Tibial artery (tissue), 4 donors: ENCODE measurements at regions of chr14 and their contacts with region 1.

Region 1: DNA sequence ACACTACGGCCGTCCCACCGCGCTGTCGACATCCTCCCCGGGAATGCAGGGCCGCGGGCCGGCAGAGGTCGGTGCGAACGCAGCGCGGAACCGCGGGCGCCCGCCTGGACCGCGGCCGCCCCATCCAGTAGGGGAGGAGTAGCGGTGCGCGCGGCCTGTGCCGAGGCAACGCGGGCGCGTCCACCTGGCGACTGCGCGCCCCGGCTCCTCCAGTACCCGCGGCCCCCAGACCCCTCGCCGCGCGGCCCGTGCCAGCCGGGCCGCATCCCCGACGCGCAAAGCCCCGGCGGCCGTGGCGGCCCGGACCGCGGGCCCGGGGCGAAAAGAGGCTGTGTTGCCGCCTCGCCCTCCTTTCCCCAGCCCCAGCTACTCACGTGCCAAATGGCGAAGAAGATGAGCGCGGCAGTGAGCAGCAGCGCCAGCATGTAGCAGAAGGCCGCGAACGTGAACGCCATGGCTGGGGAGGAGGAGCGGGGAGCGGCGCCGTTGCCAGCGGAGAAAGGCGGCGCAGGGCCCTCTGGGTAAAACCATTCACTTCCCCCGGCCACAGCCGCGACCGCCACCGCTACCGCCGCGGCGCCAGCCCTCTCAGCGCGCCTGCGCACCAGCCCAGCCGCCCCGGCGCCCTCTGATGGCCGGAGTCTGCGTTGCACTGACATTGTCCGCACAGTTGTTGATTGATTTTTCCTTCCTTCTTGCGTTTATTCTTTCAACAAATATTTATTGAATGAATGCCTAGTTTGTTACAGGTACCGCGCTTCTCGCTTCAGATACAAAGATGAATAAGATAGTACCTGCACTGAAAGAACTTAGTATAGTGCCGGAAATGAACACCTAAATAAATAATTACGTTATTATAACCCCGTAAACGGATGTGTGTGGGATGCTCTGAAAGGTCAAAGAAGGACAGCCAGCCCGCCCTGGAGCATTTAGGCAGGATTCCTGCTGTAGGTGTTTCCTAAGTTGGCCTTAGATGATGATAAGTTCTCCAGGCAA is at the start of gene CNIH1:
- DNase-seq: peak; percentile 90 to 95
- H3K4me3 ChIP-seq: peak within 1 kb of the TSS; percentile 70 to 75
- H3K27ac ChIP-seq: peak within 1 kb of the TSS; percentile 76 to 91
- H3K4me1 ChIP-seq: peaks cover 0 to 24% (median 14%) of the 10 kb centered on the region in 4 donors
- H3K27me3 ChIP-seq: no peaks in the 10 kb centered on the region
- CTCF ChIP-seq: peak; percentile 93 to 96

Region 2: GRCh38 chr14:54396493-54397335 is 44.5 kb before region 1 on chr14 and contains the start of gene CDKN3:
- intact Hi-C with region 1: loop called (anchors 2 kb)
- DNase-seq: peak; percentile 99
- H3K4me3 ChIP-seq: peak within 1 kb of the TSS; percentile 64 to 70
- H3K27ac ChIP-seq: peak within 1 kb of the TSS in 1 of 2 donors; percentile 63
- H3K4me1 ChIP-seq: peaks cover 5 to 12% (median 8%) of the 10 kb centered on the region in 4 donors
- H3K27me3 ChIP-seq: no peaks in the 10 kb centered on the region
- CTCF ChIP-seq: peak; percentile 45 to 47

Region 3: GRCh38 chr14:54509546-54510501 is 68.7 kb after region 1 on chr14 and contains the start of gene CGRRF1:
- intact Hi-C with region 1: loop called (anchors 2 kb)
- DNase-seq: peak; percentile 98 to 100
- H3K4me3 ChIP-seq: peak within 1 kb of the TSS; percentile 77 to 81
- H3K27ac ChIP-seq: peak within 1 kb of the TSS; percentile 82 to 86
- H3K4me1 ChIP-seq: peaks cover 0 to 30% (median 19%) of the 10 kb centered on the region in 4 donors
- H3K27me3 ChIP-seq: no peaks in the 10 kb centered on the region
- CTCF ChIP-seq: peak; percentile 64 to 68

Region 4: DNA sequence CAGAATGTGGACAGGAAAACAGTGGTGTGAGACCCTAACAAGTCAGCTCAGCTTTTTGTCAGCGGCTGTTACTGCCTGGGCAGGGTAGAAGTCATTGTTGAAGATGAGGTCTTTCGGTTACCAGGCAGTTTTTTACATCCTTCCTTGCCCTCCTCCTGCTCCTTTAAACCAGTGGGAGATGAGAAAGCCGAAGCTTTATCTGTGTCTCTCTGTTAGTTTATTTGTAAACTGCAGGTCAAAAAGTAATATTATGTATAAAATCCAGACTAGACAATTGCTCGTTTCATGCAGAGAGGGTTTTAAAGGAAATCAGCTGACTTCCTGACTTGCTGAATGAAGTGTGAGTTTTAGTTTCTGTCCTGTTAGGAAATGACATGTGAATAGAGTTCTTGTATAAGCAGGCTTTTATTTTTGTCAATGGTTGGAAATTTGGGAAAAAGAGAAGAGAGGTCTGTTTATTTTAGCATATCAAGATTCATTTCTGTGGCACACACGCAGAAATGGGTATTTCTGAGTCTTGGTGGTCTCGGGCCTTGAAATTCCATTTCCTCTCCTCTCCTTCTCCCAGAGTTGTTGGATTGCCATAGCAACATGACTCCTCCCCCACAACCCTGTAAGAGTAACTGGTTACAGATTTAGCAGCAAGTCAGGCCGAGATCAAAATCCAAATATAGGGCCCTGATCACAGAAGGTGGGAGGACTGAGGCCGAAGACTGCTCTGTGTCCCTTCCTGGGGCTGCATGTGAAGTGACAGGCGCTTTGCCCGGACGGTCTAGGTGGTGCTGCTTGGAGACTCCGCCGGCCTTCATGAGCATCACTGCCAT is 186.6 kb after region 1 on chr14:
- intact Hi-C with region 1: no loop called
- DNase-seq: peak; percentile 66 to 69
- H3K4me3 ChIP-seq: peak overlapping the region; percentile 5 to 32
- H3K27ac ChIP-seq: peak overlapping the region; percentile 70 to 72
- H3K4me1 ChIP-seq: peaks cover 0 to 90% (median 29%) of the 10 kb centered on the region in 4 donors
- H3K27me3 ChIP-seq: no peaks in the 10 kb centered on the region
- CTCF ChIP-seq: peak in 1 of 2 experiments; percentile 3